Psoas muscle (tissue), 8 donors: ENCODE measurements at regions of chr6 and their contacts with region 1.

Region 1: GRCh38 chr6:130020907-130021629 is 2.7 kb downstream of the L3MBTL3 start:
- DNase-seq: peak; percentile 68 to 75
- ATAC-seq: peak; percentile 77 to 89 (median 83)
- H3K4me3 ChIP-seq: peak overlapping the region; percentile 89
- H3K27ac ChIP-seq: peak overlapping the region; percentile 63
- H3K4me1 ChIP-seq: no peaks in the 10 kb centered on the region
- H3K27me3 ChIP-seq: no peaks in the 10 kb centered on the region
- CTCF ChIP-seq: peak; percentile 83

Region 2: DNA sequence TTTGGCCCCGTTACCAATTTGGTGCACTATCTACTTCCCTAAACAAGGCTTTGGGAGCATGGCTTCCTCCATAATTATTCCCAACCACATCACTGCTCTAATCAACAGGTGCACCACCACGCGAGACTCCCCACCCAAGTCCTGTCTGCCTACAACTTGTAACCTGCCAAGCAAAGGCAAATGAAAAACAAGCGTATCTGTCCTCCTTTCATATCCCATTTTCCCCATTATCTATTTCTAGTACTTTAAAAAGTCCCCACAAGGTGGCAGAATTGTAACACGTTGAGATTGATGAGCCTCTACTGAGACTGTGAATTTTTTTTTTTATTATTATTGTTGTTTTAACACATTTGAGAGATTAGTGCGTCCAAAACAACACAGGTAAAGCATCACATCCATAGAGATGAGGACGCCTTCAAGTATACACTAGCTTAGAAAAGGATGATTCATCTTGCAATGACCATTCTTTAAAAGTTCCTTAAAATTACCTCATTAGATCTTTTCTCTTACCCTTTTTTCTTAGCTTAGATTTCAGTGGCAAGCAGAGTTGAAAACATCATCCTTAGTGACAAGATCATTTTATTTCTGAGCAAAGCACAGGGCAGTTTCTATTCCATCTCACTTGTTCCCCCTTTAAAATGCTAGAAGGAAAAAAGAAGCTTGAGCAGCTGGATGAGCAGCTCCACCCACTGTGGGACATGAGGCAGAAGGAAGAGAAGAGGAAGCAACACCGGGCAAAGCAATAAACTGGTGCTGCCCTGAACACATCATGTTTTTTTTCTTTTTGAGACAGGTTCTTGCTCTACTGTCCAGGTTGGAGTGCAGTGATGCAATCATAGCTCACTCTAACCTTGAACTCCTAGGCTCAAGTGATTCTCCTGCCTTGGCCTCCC is 521.9 kb before region 1 on chr6:
- intact Hi-C with region 1: loop called in 1 of 2 experiments (anchors 5 kb)
- DNase-seq: no peak
- ATAC-seq: peak in 2 of 4 donors; percentile 44 to 58
- H3K4me3 ChIP-seq: peak overlapping the region; percentile 16
- H3K27ac ChIP-seq: no peak overlapping the region
- H3K4me1 ChIP-seq: peaks cover 40% of the 10 kb centered on the region
- H3K27me3 ChIP-seq: no peaks in the 10 kb centered on the region
- CTCF ChIP-seq: peak; percentile 70

Region 3: DNA sequence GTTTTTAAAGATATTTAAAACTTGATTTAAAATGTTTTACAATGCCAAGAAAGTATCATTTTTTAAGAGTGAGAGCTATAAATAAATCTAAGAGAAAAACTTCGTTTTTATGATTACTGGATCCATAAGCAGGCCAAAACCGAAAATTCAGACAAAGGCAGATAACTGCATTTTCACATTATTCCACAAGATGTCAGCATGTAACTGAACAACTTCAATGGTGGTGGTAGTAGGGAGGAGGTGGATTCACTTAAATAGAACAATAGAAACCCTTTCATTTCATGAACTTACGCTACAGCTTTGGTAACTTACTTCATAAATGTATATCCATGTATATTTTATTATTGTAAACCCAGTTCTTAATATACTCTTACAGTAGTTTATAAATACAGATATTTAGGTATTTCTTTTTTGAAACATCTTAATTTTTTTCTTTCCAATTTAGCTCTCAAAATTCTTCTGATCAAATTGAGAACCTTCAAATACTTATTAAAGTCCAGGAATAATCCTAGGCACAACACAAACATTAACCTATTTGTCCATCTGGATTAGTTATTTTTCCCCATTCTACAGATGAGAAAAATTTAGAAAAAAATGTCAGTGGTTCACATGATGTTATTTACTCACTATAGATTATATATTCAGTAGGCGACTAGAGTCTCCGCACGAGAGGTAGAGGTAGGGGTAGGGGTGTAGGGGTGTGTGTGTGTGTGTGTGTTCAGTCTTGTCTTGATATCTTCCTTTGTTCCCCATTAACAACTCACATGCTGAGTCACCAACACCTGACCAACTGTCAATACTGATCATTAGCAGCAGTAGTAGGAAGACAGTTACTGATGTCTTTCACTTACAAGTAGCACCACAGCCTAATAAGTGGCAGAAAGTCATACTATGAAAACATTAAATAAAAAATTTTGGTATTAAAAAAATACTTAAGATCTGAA is 422.6 kb before region 1 on chr6:
- intact Hi-C with region 1: loop called in 1 of 2 experiments (anchors 5 kb)
- DNase-seq: no peak
- ATAC-seq: peak; percentile 68 to 93 (median 78)
- H3K4me3 ChIP-seq: no peak overlapping the region
- H3K27ac ChIP-seq: no peak overlapping the region
- H3K4me1 ChIP-seq: no peaks in the 10 kb centered on the region
- H3K27me3 ChIP-seq: no peaks in the 10 kb centered on the region
- CTCF ChIP-seq: peak; percentile 91

Region 4: GRCh38 chr6:129766959-129767728 is 253.9 kb before region 1 on chr6:
- intact Hi-C with region 1: loop called in 1 of 2 experiments (anchors 10 kb)
- DNase-seq: peak; percentile 21 to 54
- ATAC-seq: peak; percentile 65 to 74 (median 70)
- H3K4me3 ChIP-seq: peak overlapping the region; percentile 57
- H3K27ac ChIP-seq: no peak overlapping the region
- H3K4me1 ChIP-seq: peaks cover 10% of the 10 kb centered on the region
- H3K27me3 ChIP-seq: peaks cover 0 to 25% (median 0%) of the 10 kb centered on the region in 3 donors
- CTCF ChIP-seq: no peak

Region 5: DNA sequence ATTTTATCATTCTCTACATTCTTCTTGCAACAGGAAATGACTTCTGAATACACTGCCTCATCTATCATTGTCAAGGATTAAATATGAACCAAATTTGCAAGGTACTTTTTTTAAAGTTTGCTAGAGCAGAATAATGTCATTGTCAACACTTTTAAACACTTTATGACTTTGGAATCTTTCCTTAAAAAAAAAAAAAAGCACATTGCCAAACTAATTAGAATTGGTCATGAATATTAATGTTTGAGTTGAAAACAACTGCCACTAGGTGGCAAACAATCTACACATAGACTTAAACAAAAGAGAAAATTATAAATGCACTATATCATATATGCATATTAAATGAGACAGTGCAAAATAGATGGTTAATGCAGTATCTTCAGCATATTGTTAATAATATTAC is 127.4 kb before region 1 on chr6:
- intact Hi-C with region 1: loop called (anchors 5 kb)
- DNase-seq: no peak
- ATAC-seq: no peak
- H3K4me3 ChIP-seq: no peak overlapping the region
- H3K27ac ChIP-seq: no peak overlapping the region
- H3K4me1 ChIP-seq: no peaks in the 10 kb centered on the region
- H3K27me3 ChIP-seq: no peaks in the 10 kb centered on the region
- CTCF ChIP-seq: peak; percentile 30

Region 6: GRCh38 chr6:129946439-129947145 is 74.5 kb before region 1 on chr6:
- intact Hi-C with region 1: no loop called
- DNase-seq: no peak
- ATAC-seq: no peak
- H3K4me3 ChIP-seq: no peak overlapping the region
- H3K27ac ChIP-seq: no peak overlapping the region
- H3K4me1 ChIP-seq: no peaks in the 10 kb centered on the region
- H3K27me3 ChIP-seq: no peaks in the 10 kb centered on the region
- CTCF ChIP-seq: no peak